ENCODE measurements at regions of chr14 and their contacts with region 1.

Region 1: DNA sequence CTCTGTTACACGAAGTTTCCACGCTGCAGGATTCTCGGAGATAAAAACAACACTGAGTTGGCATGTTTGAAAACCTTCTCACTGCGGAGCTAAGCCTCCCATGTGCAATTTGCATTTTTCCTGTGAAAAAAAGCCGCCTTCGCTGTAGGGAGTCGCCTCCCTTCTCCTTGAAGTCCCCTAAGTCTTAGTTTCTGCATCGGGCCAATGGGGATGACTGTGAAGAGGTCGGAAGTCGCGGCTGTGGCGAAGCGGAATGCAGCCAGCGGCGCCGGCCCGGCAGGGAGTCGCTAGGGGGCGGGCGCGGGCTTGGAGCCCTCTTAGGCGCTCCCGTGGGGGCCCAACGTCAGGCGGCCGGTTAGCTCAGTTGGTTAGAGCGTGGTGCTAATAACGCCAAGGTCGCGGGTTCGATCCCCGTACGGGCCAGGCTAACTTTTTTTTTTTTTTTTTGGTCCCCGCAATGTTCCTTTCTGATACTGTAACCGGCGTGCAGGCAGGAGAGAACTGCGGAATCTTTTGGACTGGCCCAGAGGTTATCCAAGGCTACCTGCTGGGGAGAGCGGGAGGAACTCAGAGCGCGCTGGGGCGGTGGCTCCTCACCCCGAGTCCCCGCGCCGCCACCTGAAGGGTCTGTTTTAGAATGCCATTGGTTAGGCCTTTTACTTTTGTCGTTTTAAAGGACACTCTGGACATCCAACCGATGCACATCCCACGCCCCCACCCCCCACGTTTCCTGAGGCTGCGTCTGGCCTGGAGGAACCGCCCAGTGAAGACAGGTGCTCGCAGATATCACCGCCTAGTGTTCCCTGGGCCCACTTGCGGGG is 2.6 kb upstream of the ZNF839 start:
- DNase-seq: peak; percentile 94
- H3K4me3 Mint-ChIP-seq: peak overlapping the region; percentile 94
- H3K27ac Mint-ChIP-seq: peak overlapping the region; percentile 92
- H3K4me1 Mint-ChIP-seq: peaks cover 56% of the 10 kb centered on the region
- H3K27me3 Mint-ChIP-seq: peaks cover 3% of the 10 kb centered on the region

Region 2: DNA sequence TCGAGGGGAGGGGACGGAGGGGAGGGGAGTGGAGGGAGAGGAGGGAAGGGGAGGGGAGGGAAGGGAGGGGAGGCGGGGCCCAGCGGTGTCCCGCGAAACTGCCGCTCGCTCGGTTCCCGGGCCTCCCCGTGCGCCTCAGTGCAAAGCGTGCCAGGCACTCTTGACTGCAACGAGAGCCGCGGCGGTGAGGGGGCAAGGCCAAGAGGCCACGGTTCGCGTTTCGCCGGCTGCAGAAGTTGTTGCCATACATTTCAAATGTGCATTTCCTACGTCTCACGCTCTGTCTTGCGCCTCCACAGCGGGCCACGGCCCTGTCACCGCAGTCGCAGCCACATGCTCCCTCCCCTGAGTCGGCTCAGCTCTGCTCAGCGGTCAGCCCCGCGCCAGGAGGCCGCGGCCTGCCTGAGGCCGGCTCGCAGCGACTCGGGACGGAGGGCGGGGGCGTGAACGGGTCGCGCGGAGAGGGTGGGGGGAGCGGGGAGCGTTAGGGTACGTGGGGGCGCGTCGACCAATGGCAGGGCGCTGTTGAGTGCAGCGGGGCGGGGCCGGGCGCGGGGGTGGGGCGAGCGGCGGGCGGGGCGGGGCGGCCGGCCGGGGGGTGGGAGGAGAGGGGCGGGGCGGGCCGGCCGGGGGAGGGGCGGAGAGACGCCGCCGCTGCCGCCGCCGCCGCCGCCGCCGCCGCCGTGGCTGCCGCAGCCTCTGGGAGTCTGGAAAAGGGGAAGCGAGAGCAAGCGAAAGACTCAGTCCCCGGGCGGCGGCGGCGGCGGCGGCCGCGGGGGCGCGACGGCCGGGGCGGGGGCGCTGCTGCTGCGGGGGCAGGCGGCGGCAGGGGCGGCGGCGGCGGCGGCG is 555.7 kb before region 1 on chr14 and contains the start of gene PPP2R5C:
- intact Hi-C with region 1: loop called (anchors 5 kb)
- DNase-seq: peak; percentile 72
- H3K4me3 Mint-ChIP-seq: peak within 1 kb of the TSS; percentile 90
- H3K27ac Mint-ChIP-seq: peak within 1 kb of the TSS; percentile 79
- H3K4me1 Mint-ChIP-seq: peaks cover 33% of the 10 kb centered on the region
- H3K27me3 Mint-ChIP-seq: peaks cover 3% of the 10 kb centered on the region
- total RNA-seq, gene PPP2R5C: 157 and 166 TPM in 2 replicates

Region 3: GRCh38 chr14:101964297-101965144 is 352.4 kb before region 1 on chr14 and contains the start of gene DYNC1H1:
- intact Hi-C with region 1: loop called (anchors 1 kb)
- DNase-seq: peak; percentile 89
- H3K4me3 Mint-ChIP-seq: peak within 1 kb of the TSS; percentile 90
- H3K27ac Mint-ChIP-seq: peak within 1 kb of the TSS; percentile 93
- H3K4me1 Mint-ChIP-seq: peaks cover 38% of the 10 kb centered on the region
- H3K27me3 Mint-ChIP-seq: peaks cover 2% of the 10 kb centered on the region
- total RNA-seq, gene DYNC1H1: 241 and 254 TPM in 2 replicates

Region 4: GRCh38 chr14:102086972-102087761 is 229.8 kb before region 1 on chr14 and contains the start of gene HSP90AA1:
- intact Hi-C with region 1: loop called (anchors 1 kb)
- DNase-seq: peak; percentile 94
- H3K4me3 Mint-ChIP-seq: peak within 1 kb of the TSS; percentile 99
- H3K27ac Mint-ChIP-seq: peak within 1 kb of the TSS; percentile 97
- H3K4me1 Mint-ChIP-seq: peaks cover 63% of the 10 kb centered on the region
- H3K27me3 Mint-ChIP-seq: no peaks in the 10 kb centered on the region
- total RNA-seq, gene HSP90AA1: 993 and 995 TPM in 2 replicates

Region 5: GRCh38 chr14:102235275-102235897 is 81.6 kb before region 1 on chr14:
- intact Hi-C with region 1: loop called (anchors 1 kb)
- DNase-seq: peak; percentile 68
- H3K4me3 Mint-ChIP-seq: no peak overlapping the region
- H3K27ac Mint-ChIP-seq: no peak overlapping the region
- H3K4me1 Mint-ChIP-seq: no peaks in the 10 kb centered on the region
- H3K27me3 Mint-ChIP-seq: no peaks in the 10 kb centered on the region

Region 6: GRCh38 chr14:102509744-102510615 is 193.0 kb after region 1 on chr14 and contains the start of gene ANKRD9:
- intact Hi-C with region 1: loop called (anchors 2 kb)
- DNase-seq: peak; percentile 89
- H3K4me3 Mint-ChIP-seq: peak within 1 kb of the TSS; percentile 84
- H3K27ac Mint-ChIP-seq: peak within 1 kb of the TSS; percentile 55
- H3K4me1 Mint-ChIP-seq: peaks cover 14% of the 10 kb centered on the region
- H3K27me3 Mint-ChIP-seq: no peaks in the 10 kb centered on the region
- total RNA-seq, gene ANKRD9: 13.4 TPM in 2 replicates

Measured in activated T-helper 1 cell treated with anti-CD3 and anti-CD28 coated beads, Interleukin-12 subunit alpha, Interleukin-12 subunit beta, Interleukin-2, Interleukin-4 antibody, amounts not matched to agents 30 ng/mL and 10 ng/mL and 1 ng/mL, durations not matched to agents 14 hours and 24 hours and 36 hours (primary cell).